GM12878 (cell line): ENCODE measurements at regions of chr17 and their contacts with region 1.

Region 1: DNA sequence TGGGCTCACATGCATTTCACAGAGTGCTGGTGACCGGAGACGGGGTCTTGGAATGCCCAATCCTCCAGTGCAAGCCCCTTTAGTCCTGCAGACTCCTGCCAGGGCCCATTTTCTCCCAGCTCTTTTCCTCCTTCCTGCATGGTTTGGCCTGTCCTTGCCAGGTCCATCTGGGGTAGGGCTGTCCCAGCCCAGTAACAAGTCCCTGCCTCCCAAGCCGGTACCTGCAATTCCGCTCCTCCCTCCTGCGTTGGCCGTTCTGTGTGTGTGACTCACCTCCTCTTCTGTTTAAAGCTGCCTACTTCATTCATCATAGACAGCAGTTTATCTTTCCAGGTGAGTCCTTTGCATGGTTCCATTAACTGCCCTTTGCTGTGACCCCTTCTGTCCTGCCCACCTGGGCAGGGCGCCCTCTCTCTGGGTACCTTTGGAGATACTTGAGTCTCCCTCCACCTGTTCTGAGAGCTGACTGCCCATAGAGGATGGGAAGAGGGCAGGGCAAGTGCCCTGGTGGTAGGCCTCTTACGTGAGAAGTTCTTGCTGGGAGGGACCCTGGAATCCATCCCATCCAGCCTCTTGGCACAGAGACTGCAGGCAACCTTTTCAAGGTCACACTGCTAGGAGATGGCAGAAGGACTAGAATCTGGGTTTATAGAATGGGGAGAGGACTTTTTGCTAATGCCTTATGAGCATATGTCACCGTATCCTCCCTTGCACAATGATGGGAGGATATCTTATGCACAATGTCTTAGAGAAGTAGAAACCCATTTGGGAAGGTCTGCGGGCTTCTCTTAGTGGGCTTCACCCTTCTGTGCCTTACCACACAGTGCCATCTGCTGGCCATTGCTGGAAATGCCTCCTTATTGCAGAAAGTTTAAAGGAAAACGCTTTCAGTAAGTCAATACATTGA is 29.7 kb upstream of the LGALS9 start:
- DNase-seq: peak; percentile 51
- ATAC-seq: peak; percentile 53
- H3K4me3 ChIP-seq: no peak overlapping the region
- H3K27ac ChIP-seq: no peak overlapping the region
- H3K4me1 ChIP-seq: peaks cover 5% of the 10 kb centered on the region; the same call in 1 of the 2 replicates
- H3K27me3 ChIP-seq: no peaks in the 10 kb centered on the region
- CTCF ChIP-seq: peak; percentile 85 to 98 (median 97)
- EP300 ChIP-seq: no peak
- POLR2A ChIP-seq: no peak
- RAD21 ChIP-seq: peak; percentile 95

Region 2: GRCh38 chr17:27236717-27237315 is 364.5 kb before region 1 on chr17:
- CTCF ChIA-PET with region 1: interaction called, 129 read pairs
- POLR2A ChIA-PET with region 1: no interaction called
- RAD21 ChIA-PET with region 1: interaction called, 51 read pairs
- SMC1A ChIA-PET with region 1: interaction called, 21 read pairs
- in situ Hi-C with region 1: loop called (anchors 5 kb)
- intact Hi-C with region 1: loop called (anchors 1 kb)
- DNase-seq: no peak
- ATAC-seq: peak; percentile 50
- H3K4me3 ChIP-seq: no peak overlapping the region
- H3K27ac ChIP-seq: no peak overlapping the region
- H3K4me1 ChIP-seq: peaks cover 28% of the 10 kb centered on the region
- H3K27me3 ChIP-seq: no peaks in the 10 kb centered on the region
- CTCF ChIP-seq: peak; percentile 81 to 88 (median 87)
- EP300 ChIP-seq: no peak
- POLR2A ChIP-seq: no peak
- RAD21 ChIP-seq: peak; percentile 94

Region 3: GRCh38 chr17:27360507-27360906 is 240.8 kb before region 1 on chr17:
- CTCF ChIA-PET with region 1: interaction called, 39 read pairs
- POLR2A ChIA-PET with region 1: no interaction called
- RAD21 ChIA-PET with region 1: interaction called, 25 read pairs
- SMC1A ChIA-PET with region 1: interaction called, 43 read pairs
- in situ Hi-C with region 1: no loop called
- intact Hi-C with region 1: no loop called
- DNase-seq: no peak
- ATAC-seq: no peak
- H3K4me3 ChIP-seq: no peak overlapping the region
- H3K27ac ChIP-seq: no peak overlapping the region
- H3K4me1 ChIP-seq: no peaks in the 10 kb centered on the region
- H3K27me3 ChIP-seq: no peaks in the 10 kb centered on the region
- CTCF ChIP-seq: no peak
- EP300 ChIP-seq: no peak
- POLR2A ChIP-seq: no peak
- RAD21 ChIP-seq: no peak

Region 4: DNA sequence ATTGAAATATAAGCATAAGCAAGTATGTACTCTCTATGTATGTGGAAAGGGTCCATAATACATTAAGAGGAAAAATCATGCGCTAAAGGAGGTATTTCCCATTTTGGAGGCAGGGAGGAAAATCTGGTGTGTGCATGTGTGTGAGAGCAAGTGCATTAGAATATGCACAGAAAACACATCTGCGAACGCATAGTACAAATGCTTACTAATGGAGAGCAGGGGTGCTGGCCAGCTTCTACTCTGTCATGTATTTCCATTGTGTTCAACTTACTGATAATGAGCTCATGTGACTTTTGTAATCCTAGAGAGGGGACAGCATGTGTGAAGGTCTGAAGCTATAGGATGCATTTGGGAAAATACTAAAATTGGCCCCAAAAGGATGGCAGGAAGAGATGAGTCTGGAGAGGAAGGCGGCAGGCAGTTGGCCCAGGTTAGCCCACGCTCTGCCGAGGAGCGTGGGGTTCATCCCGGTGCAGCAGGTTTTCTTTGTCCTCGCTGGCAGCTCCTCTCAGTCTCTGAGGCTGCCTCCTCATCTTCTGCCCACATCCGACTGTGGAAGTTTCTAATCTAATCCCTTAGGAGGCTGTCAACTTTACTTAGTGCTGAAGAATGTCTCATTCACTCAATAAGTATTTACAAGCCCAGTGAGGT is 162.8 kb before region 1 on chr17:
- CTCF ChIA-PET with region 1: interaction called, 13 read pairs
- POLR2A ChIA-PET with region 1: no interaction called
- RAD21 ChIA-PET with region 1: no interaction called
- SMC1A ChIA-PET with region 1: interaction called, 3 read pairs
- in situ Hi-C with region 1: no loop called
- intact Hi-C with region 1: no loop called
- DNase-seq: no peak
- ATAC-seq: no peak
- H3K4me3 ChIP-seq: no peak overlapping the region
- H3K27ac ChIP-seq: no peak overlapping the region
- H3K4me1 ChIP-seq: no peaks in the 10 kb centered on the region
- H3K27me3 ChIP-seq: no peaks in the 10 kb centered on the region
- CTCF ChIP-seq: no peak
- EP300 ChIP-seq: no peak
- POLR2A ChIP-seq: no peak
- RAD21 ChIP-seq: no peak

Region 5: DNA sequence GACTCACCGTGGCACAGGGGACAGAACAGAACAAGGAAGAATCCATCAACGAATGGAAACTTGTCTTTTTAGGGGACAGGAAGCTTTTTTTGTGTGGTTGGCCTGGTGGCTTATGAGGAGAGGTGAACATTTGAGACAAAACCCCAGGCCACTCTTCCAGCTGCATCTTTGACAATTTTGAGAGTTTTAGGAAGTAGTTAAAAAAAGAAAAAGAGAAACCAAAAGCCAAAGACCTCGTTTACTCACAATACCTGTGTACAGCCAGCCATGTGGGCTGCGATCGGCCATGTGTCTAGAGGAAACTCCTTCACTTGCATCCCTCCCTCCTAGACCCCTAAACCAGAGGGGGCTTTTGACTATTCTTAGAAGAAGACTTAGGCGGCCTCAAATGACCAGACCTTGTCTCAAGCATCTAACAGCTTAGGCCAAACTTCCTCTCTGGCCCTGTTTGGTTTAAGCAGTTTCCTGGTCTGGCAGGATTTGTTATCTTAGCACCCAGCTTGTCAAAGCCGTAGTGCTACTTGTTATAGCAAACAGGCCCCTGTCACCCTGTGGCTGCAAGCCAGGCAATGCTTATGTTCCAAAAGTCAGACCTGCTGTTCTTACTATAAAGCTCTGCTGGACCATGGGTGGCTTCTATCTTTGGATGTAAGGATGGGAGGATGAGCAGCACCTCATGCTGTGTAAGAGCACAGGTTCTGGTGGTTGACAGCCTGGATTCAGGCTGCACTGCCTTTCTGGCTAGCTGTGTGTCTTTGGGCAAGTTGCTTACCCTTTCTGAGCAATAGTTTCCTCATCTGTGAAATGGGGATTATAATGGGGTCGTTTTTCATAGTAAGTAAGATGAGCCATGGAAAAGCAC is 127.3 kb before region 1 on chr17:
- CTCF ChIA-PET with region 1: interaction called, 44 read pairs
- POLR2A ChIA-PET with region 1: no interaction called
- RAD21 ChIA-PET with region 1: interaction called, 19 read pairs
- SMC1A ChIA-PET with region 1: interaction called, 15 read pairs
- in situ Hi-C with region 1: no loop called
- intact Hi-C with region 1: no loop called
- DNase-seq: peak; percentile 97
- ATAC-seq: peak; percentile 35
- H3K4me3 ChIP-seq: peak overlapping the region; percentile 42
- H3K27ac ChIP-seq: peak overlapping the region; percentile 98
- H3K4me1 ChIP-seq: peaks cover 85% of the 10 kb centered on the region
- H3K27me3 ChIP-seq: no peaks in the 10 kb centered on the region
- CTCF ChIP-seq: no peak
- EP300 ChIP-seq: peak; percentile 68 to 81; a peak in 2 of 4 replicates
- POLR2A ChIP-seq: no peak
- RAD21 ChIP-seq: peak; percentile 17; the same call in 1 of the 2 replicates

Region 6: DNA sequence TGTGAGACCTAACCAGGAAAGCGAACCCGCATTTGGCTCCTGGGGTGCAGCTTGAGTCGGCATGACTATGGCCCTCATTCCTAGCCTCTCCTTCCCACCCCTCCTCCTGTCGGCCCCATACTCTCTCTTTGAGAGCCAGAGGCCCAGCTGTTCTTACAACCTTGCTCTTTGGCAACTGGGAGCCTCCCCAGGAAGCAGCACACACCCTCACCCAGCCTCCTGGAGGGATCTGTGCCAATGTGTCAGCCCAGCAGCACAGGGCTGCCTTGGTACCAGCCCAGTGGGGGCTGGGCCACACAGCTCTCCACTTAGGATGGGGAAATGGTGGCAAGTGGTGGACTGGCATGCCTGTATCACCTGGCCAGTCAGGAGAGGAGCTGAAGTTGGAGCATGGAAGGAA is 40.7 kb before region 1 on chr17:
- CTCF ChIA-PET with region 1: interaction called, 29 read pairs
- POLR2A ChIA-PET with region 1: no interaction called
- RAD21 ChIA-PET with region 1: interaction called, 4 read pairs
- SMC1A ChIA-PET with region 1: interaction called, 4 read pairs
- in situ Hi-C with region 1: no loop called
- intact Hi-C with region 1: no loop called
- DNase-seq: no peak
- ATAC-seq: no peak
- H3K4me3 ChIP-seq: no peak overlapping the region
- H3K27ac ChIP-seq: no peak overlapping the region
- H3K4me1 ChIP-seq: no peaks in the 10 kb centered on the region; the same call in 1 of the 2 replicates
- H3K27me3 ChIP-seq: no peaks in the 10 kb centered on the region
- CTCF ChIP-seq: no peak
- EP300 ChIP-seq: no peak
- POLR2A ChIP-seq: no peak
- RAD21 ChIP-seq: no peak

Region 7: GRCh38 chr17:27616414-27616813 is 15.1 kb after region 1 on chr17:
- CTCF ChIA-PET with region 1: interaction called, 14 read pairs
- POLR2A ChIA-PET with region 1: no interaction called
- RAD21 ChIA-PET with region 1: interaction called, 3 read pairs
- SMC1A ChIA-PET with region 1: interaction called, 3 read pairs
- in situ Hi-C with region 1: no loop called
- intact Hi-C with region 1: no loop called
- DNase-seq: no peak
- ATAC-seq: no peak
- H3K4me3 ChIP-seq: no peak overlapping the region
- H3K27ac ChIP-seq: peak overlapping the region; percentile 48
- H3K4me1 ChIP-seq: peaks cover 5% of the 10 kb centered on the region; the same call in 1 of the 2 replicates
- H3K27me3 ChIP-seq: no peaks in the 10 kb centered on the region
- CTCF ChIP-seq: no peak
- EP300 ChIP-seq: no peak
- POLR2A ChIP-seq: no peak
- RAD21 ChIP-seq: no peak

Region 8: DNA sequence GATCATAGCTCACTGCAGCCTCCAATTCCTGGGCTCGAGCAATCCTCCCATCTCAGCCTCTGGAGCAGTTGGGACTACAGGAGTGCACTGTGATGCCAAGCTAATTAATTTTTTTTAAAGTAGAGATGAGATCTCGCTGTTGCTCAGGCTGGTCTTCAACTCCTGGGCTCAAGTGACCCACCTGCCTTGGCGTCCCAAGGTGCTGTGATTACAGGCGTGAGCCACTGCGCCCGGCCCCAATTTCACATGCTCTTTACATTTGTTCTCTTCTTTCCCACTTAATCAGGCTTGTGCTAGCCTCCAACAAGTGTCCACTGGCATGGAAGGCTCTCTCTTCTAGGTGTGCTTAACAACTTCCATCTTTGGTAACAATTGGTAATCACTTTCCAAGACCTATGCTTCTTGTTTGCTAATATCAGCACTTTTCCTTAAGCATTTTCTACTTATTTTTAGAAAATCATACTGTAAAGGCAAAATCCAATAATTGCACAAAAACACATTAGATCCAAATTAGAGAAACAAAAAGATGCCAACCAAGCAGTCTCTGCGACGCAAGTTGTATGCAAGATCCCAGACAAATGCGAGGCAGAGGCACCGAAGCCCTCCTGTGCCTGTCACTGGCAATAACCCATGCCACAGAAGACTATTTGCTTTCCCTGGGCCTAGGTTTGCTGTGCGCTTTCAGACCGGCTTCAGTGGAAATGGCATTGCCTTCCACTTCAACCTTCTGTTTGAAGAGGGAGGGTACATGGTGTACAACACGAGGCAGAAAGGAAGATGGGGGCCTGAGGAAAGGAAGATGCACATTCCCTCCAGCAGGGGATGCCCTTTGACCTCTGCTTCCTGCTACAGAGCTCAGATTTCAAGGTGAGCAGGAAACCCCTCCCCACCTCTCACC is 146.4 kb after region 1 on chr17:
- CTCF ChIA-PET with region 1: no interaction called
- POLR2A ChIA-PET with region 1: no interaction called
- RAD21 ChIA-PET with region 1: no interaction called
- SMC1A ChIA-PET with region 1: no interaction called
- in situ Hi-C with region 1: no loop called
- intact Hi-C with region 1: no loop called
- DNase-seq: no peak
- ATAC-seq: no peak
- H3K4me3 ChIP-seq: no peak overlapping the region
- H3K27ac ChIP-seq: no peak overlapping the region
- H3K4me1 ChIP-seq: peaks cover 5% of the 10 kb centered on the region
- H3K27me3 ChIP-seq: no peaks in the 10 kb centered on the region
- CTCF ChIP-seq: peak in 2 of 3 experiments; percentile 12 to 28; a peak in 1 of 6 replicates
- EP300 ChIP-seq: no peak
- POLR2A ChIP-seq: no peak
- RAD21 ChIP-seq: no peak

Region 9: DNA sequence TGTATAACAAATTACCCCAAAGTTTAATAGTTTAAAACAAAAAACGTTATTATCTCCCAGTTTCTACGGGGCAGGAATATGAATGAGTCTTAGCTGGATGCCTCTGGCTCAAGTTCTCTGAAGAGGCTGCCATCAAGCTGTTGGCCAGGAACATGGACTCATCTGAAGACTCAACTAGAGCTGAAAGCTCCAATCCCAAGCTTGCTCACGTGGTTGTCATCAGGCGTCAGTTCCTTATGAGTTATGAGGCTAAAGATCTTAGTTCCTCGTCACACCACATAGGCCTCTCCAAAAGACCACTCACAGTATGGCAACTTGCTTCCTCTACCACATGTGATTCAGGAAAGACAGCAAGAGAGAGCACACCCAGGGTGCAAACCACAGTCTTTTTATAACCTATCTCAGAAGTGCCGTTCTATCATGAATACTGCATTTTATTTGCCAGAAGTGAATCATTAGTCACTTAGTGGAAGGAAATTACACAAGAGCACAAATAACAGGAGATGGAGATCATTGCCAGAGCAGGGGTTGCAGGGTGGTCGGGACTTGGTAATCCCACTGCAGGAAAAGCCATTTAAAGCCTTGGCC is 392.5 kb after region 1 on chr17:
- CTCF ChIA-PET with region 1: no interaction called
- POLR2A ChIA-PET with region 1: no interaction called
- RAD21 ChIA-PET with region 1: no interaction called
- SMC1A ChIA-PET with region 1: no interaction called
- in situ Hi-C with region 1: no loop called
- intact Hi-C with region 1: no loop called
- DNase-seq: no peak
- ATAC-seq: no peak
- H3K4me3 ChIP-seq: no peak overlapping the region
- H3K27ac ChIP-seq: no peak overlapping the region
- H3K4me1 ChIP-seq: no peaks in the 10 kb centered on the region
- H3K27me3 ChIP-seq: peaks cover 1 to 2% of the 10 kb centered on the region in 2 experiments; a peak in 2 of 4 replicates
- CTCF ChIP-seq: no peak
- EP300 ChIP-seq: no peak
- POLR2A ChIP-seq: no peak
- RAD21 ChIP-seq: no peak